Naive thymus-derived CD8-positive, alpha-beta T cell (primary cell): ENCODE measurements at regions of chr6 and their contacts with region 1.

Region 1: GRCh38 chr6:42050266-42051032 is at the start of gene TAF8:
- DNase-seq: peak; percentile 81 to 96 (median 86)
- ATAC-seq: peak; percentile 57 to 61
- H3K4me3 Mint-ChIP-seq: peak within 1 kb of the TSS; percentile 94 to 99 (median 98)
- H3K27ac Mint-ChIP-seq: peak within 1 kb of the TSS; percentile 94 to 99 (median 96)
- H3K4me1 Mint-ChIP-seq: peaks cover 15 to 83% (median 62%) of the 10 kb centered on the region in 4 donors
- H3K27me3 Mint-ChIP-seq: no peaks in the 10 kb centered on the region
- polyA plus RNA-seq, gene TAF8: 24.4 to 36.8 (median 28.6) TPM

Region 2: DNA sequence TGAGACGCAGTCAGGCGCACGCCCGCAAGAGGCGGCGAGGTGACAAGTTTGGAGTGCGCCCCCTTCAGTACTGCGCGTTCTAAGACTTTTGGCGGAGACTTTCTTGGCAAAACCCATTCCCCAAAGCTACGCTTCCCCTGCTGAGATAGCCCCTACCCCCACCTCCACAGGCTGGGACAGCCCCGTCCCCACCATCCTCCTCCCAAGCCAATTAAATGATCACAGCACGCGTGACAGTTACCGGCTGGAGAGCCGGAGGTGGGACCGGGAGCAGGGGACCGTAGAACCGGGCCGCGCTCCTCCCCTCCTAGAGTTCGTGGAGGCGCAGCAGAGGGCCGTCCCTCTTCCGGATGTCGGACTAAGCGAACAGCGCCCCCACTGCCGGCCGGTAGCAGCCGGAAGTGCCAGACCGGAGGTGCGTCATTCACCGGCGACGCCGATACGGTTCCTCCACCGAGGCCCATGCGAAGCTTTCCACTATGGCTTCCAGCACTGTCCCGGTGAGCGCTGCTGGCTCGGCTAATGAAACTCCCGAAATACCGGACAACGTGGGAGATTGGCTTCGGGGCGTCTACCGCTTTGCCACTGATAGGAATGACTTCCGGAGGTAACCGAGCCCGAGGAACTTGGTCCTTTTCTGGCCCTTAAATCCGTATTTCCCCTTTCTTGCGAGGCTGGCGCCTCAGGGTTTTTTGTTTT is 263.1 kb before region 1 on chr6 and contains the start of gene TOMM6:
- POLR2A ChIA-PET with region 1: interaction called, 102 read pairs
- DNase-seq: peak; percentile 90 to 97 (median 95)
- ATAC-seq: peak; percentile 80
- H3K4me3 Mint-ChIP-seq: peak within 1 kb of the TSS; percentile 89 to 97 (median 94)
- H3K27ac Mint-ChIP-seq: peak within 1 kb of the TSS; percentile 92 to 98 (median 96)
- H3K4me1 Mint-ChIP-seq: peaks cover 2 to 28% (median 13%) of the 10 kb centered on the region in 4 donors
- H3K27me3 Mint-ChIP-seq: peaks cover 0 to 4% (median 0%) of the 10 kb centered on the region in 5 donors
- polyA plus RNA-seq, gene TOMM6: 433 to 440 (median 433) TPM

Region 3: DNA sequence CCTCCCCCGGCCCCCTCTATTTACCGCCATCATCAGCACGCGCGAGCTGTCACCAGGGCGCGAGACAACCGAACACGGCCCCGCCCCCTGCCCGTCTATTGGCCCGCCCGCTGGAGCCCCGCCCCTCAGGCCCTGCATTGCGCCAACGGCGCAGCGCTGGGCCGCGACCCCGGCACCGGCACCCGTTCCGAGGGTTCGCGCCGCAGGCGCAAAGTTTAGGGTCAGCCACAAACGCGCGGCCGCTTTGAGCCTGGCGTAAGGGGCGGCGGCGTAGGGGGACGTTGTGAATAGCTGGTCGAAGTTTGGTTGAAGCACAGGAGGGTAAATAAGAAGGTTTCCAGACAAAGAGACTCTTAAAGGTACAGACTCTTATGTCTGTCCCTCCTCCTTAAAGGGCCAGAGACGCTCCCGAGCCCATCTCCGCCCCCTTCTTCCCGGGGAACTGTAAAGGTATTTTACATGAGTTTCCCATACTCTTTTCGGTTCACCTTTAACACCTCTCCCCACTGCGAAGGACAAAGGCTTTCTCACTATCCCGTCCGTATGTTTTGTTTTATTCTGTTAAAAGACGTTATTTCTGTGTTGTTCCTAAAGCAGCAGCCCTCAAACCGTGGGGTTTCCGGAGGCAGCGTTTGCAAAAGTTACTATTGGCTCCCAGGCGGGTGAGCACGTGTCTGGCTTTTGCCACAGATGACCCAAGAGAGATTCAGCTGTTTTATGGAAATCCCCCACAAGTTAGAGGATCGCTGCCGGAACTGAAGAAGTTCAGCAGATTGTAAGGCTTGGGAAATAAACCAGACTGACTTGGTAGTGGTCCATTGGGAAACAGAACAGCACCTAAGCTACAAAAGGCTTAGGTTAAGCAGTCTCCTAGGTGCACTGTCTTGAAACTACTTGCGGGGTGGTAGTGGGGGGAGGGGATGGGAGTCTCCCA is 154.9 kb before region 1 on chr6 and contains the start of gene USP49:
- POLR2A ChIA-PET with region 1: interaction called, 10 read pairs
- DNase-seq: peak; percentile 81 to 95 (median 90)
- ATAC-seq: peak; percentile 91 to 92
- H3K4me3 Mint-ChIP-seq: no peak within 1 kb of the TSS
- H3K27ac Mint-ChIP-seq: peak within 1 kb of the TSS in 9 of 10 donors; percentile 73 to 96 (median 90)
- H3K4me1 Mint-ChIP-seq: peaks cover 0 to 11% (median 9%) of the 10 kb centered on the region in 4 donors
- H3K27me3 Mint-ChIP-seq: no peaks in the 10 kb centered on the region
- polyA plus RNA-seq, gene USP49: 0.34 to 0.48 (median 0.42) TPM

Region 4: GRCh38 chr6:41920921-41921711 is 129.3 kb before region 1 on chr6 and contains the starts of genes BYSL and MED20:
- POLR2A ChIA-PET with region 1: interaction called, 98 read pairs
- DNase-seq: peak; percentile 89 to 98 (median 94)
- ATAC-seq: peak; percentile 86 to 91
- H3K4me3 Mint-ChIP-seq: peak within 1 kb of the TSS; percentile 97 to 100 (median 100)
- H3K27ac Mint-ChIP-seq: peak within 1 kb of the TSS; percentile 97 to 100 (median 99)
- H3K4me1 Mint-ChIP-seq: peaks cover 37 to 58% (median 54%) of the 10 kb centered on the region in 4 donors
- H3K27me3 Mint-ChIP-seq: peaks cover 0 to 4% (median 0%) of the 10 kb centered on the region in 5 donors
- polyA plus RNA-seq, gene BYSL: 3.5 to 7.5 (median 4.9) TPM
- polyA plus RNA-seq, gene MED20: 2.8 to 5.1 (median 4.3) TPM

Region 5: GRCh38 chr6:41941280-41942066 is 109.0 kb before region 1 on chr6 and contains the start of gene CCND3:
- POLR2A ChIA-PET with region 1: interaction called, 233 read pairs
- DNase-seq: peak; percentile 66 to 89 (median 77)
- ATAC-seq: peak; percentile 67 to 71
- H3K4me3 Mint-ChIP-seq: peak within 1 kb of the TSS; percentile 87 to 96 (median 92)
- H3K27ac Mint-ChIP-seq: peak within 1 kb of the TSS; percentile 89 to 99 (median 94)
- H3K4me1 Mint-ChIP-seq: peaks cover 43 to 79% (median 75%) of the 10 kb centered on the region in 4 donors
- H3K27me3 Mint-ChIP-seq: no peaks in the 10 kb centered on the region
- polyA plus RNA-seq, gene CCND3: 519 to 765 (median 628) TPM

Region 6: DNA sequence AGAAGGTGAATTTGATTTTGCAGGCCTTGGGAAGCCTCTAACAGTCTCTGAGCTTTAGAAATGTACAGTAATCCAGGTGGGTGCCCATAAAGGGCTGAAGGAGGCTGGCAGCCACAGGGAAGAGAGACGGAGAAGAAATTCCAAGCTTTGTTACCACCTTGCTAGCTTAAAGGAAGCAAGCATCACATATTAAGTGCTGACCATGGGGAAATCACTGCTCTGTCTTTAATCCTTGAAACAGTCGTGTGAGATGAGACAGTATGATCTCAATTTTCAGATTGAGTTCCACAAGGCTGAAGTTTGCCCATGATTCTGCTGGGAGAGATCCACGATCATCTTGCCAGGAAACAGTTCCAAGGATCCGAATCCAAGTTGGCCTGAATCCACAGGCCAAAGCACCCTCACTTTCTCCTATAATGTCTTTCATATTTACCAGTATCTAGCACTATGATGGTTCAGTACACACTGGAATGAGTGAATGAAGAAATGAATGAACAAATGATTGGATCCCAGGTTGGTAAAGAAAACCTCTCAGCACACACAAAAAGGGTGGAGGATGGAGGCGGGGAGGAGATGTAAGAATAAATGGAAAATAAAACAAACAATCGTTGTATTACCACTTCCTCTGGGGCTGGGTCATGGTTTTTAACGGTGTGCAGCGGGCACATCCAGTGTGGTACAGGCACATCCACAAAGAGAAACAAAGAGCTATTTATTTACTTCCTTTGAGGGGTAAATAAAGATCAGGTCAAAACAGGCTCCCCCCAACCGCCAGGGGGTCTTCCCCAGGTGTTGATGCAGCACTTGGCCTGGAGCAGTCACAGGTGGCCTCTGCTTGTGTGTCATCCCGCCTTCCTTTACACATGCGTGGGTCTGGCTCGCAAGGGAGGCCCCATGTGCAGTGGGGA is 28.3 kb before region 1 on chr6:
- POLR2A ChIA-PET with region 1: interaction called, 42 read pairs
- DNase-seq: peak; percentile 63 to 92 (median 82)
- ATAC-seq: peak; percentile 80 to 92
- H3K4me3 Mint-ChIP-seq: peak overlapping the region; percentile 66 to 91 (median 85)
- H3K27ac Mint-ChIP-seq: peak overlapping the region; percentile 93 to 99 (median 98)
- H3K4me1 Mint-ChIP-seq: peaks cover 45 to 96% (median 82%) of the 10 kb centered on the region in 4 donors
- H3K27me3 Mint-ChIP-seq: no peaks in the 10 kb centered on the region

Region 7: GRCh38 chr6:42104095-42104806 is 53.8 kb after region 1 on chr6:
- POLR2A ChIA-PET with region 1: interaction called, 15 read pairs
- DNase-seq: peak; percentile 46 to 85 (median 70)
- ATAC-seq: peak; percentile 90 to 93
- H3K4me3 Mint-ChIP-seq: peak overlapping the region; percentile 65 to 86 (median 72)
- H3K27ac Mint-ChIP-seq: peak overlapping the region in 8 of 10 donors; percentile 19 to 84 (median 76)
- H3K4me1 Mint-ChIP-seq: peaks cover 5 to 13% (median 8%) of the 10 kb centered on the region in 4 donors
- H3K27me3 Mint-ChIP-seq: no peaks in the 10 kb centered on the region